SK-N-SH (cell line): ENCODE measurements at regions of chr7 and their contacts with region 1.

Region 1: DNA sequence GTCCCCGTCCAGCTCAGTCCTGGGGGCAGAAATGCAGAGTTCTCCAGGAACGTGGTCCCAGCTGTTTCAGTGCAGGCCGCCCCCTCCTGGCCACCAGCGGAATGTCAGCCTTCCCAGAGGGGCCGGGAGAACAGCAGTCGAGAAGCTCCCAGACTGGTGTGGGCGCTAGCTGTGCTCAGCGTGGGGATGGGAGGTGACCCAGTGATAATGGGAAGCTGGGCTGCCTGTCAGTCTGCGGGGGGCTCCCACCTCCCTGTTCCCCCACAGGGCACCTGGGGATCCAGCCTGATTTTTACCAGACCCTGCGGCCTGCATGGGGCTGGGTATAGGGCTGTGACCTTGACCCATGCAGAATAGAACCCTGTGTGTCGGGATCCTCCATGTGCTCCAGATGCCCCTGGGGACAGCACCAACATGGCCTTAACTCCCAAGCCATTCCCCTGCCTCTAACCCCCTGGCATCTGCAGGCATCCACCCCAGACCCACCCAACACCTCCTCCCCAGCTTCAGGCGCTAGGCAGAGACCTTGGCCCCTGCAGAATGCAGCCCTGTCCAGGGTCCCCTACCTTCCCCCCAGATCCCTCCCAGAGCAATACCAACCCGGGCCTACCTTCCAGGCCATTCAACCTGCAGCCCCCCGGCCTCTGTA is 946 bp upstream of the ELN start:
- DNase-seq: peak; percentile 92
- H3K4me3 ChIP-seq: no peak overlapping the region; a peak in 1 of 4 replicates
- H3K27ac ChIP-seq: peak overlapping the region; percentile 11 to 78; a peak in 2 of 4 replicates
- H3K4me1 ChIP-seq: peaks cover 22 to 85% of the 10 kb centered on the region in 2 experiments
- H3K27me3 ChIP-seq: no peaks in the 10 kb centered on the region
- CTCF ChIP-seq: peak; percentile 99
- EP300 ChIP-seq: peak in 1 of 2 experiments; percentile 64; a peak in 2 of 4 replicates
- RAD21 ChIP-seq: peak; percentile 92

Region 2: DNA sequence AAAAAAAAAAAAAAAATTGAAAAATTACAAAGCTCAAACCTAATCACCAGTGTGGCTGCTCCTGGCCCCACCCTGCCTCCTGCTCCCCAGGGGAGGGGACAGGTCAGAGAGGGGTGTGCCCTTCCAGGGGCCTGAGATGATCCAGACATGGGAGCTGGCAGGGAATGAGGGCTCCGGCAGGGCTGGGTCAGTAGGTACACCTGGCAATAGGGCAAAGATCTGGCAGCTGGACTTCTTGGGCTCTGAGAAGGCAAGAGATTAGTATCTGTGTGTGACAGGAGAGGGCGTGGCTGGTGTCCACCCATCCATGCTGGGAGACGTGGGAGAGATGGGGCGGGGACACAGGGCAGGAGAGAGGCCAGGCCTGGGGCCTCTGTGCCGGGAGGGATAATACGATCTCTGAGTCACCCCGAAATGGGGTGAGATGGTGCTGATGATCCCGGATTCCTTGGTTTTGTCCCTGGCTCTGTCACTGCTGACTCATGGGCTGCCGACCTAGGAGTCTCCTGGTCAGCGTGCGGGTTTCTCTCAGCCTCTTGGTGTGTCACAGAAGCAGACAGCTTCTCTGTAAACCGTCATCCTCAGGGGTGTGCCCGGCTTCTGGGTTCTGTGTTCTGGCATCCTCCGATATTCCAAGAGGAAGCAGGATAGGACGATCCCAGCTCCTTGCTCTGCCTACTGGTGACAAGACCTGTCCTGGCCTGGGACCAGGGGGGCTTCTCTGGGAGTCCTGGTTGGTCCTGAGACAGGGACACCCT is 204.5 kb before region 1 on chr7:
- CTCF ChIA-PET with region 1: interaction called, 15 read pairs
- POLR2A ChIA-PET with region 1: no interaction called
- DNase-seq: peak; percentile 70
- H3K4me3 ChIP-seq: no peak overlapping the region; a peak in 1 of 4 replicates
- H3K27ac ChIP-seq: peak overlapping the region; percentile 2 to 93; a peak in 3 of 4 replicates
- H3K4me1 ChIP-seq: peaks cover 10 to 22% of the 10 kb centered on the region in 2 experiments
- H3K27me3 ChIP-seq: no peaks in the 10 kb centered on the region
- CTCF ChIP-seq: no peak
- EP300 ChIP-seq: peak; percentile 21 to 95; a peak in 2 of 4 replicates
- RAD21 ChIP-seq: no peak

Region 3: GRCh38 chr7:73872056-73872908 is 154.7 kb before region 1 on chr7:
- CTCF ChIA-PET with region 1: interaction called, 57 read pairs
- POLR2A ChIA-PET with region 1: interaction called, 3 read pairs
- DNase-seq: no peak
- H3K4me3 ChIP-seq: no peak overlapping the region
- H3K27ac ChIP-seq: no peak overlapping the region
- H3K4me1 ChIP-seq: peaks cover 0 to 33% of the 10 kb centered on the region in 2 experiments; a peak in 1 of 4 replicates
- H3K27me3 ChIP-seq: no peaks in the 10 kb centered on the region
- CTCF ChIP-seq: no peak
- EP300 ChIP-seq: peak in 1 of 2 experiments; percentile 14; a peak in 1 of 4 replicates
- RAD21 ChIP-seq: no peak

Region 4: GRCh38 chr7:73894733-73895551 is 132.1 kb before region 1 on chr7:
- CTCF ChIA-PET with region 1: interaction called, 15 read pairs
- POLR2A ChIA-PET with region 1: no interaction called
- DNase-seq: peak; percentile 87
- H3K4me3 ChIP-seq: no peak overlapping the region
- H3K27ac ChIP-seq: peak overlapping the region in 1 of 2 experiments; percentile 93; a peak in 2 of 4 replicates
- H3K4me1 ChIP-seq: peaks cover 33 to 36% of the 10 kb centered on the region in 2 experiments; a peak in 3 of 4 replicates
- H3K27me3 ChIP-seq: no peaks in the 10 kb centered on the region
- CTCF ChIP-seq: peak; percentile 35; the same call in 1 of the 2 replicates
- EP300 ChIP-seq: peak; percentile 49 to 99
- RAD21 ChIP-seq: peak; percentile 25; the same call in 1 of the 2 replicates

Region 5: GRCh38 chr7:73978661-73979563 is 48.1 kb before region 1 on chr7:
- CTCF ChIA-PET with region 1: interaction called, 25 read pairs
- POLR2A ChIA-PET with region 1: interaction called, 4 read pairs
- DNase-seq: peak; percentile 55
- H3K4me3 ChIP-seq: no peak overlapping the region
- H3K27ac ChIP-seq: no peak overlapping the region
- H3K4me1 ChIP-seq: peaks cover 0 to 11% of the 10 kb centered on the region in 2 experiments; a peak in 1 of 4 replicates
- H3K27me3 ChIP-seq: no peaks in the 10 kb centered on the region
- CTCF ChIP-seq: peak; percentile 52
- EP300 ChIP-seq: no peak
- RAD21 ChIP-seq: peak; percentile 55

Region 6: DNA sequence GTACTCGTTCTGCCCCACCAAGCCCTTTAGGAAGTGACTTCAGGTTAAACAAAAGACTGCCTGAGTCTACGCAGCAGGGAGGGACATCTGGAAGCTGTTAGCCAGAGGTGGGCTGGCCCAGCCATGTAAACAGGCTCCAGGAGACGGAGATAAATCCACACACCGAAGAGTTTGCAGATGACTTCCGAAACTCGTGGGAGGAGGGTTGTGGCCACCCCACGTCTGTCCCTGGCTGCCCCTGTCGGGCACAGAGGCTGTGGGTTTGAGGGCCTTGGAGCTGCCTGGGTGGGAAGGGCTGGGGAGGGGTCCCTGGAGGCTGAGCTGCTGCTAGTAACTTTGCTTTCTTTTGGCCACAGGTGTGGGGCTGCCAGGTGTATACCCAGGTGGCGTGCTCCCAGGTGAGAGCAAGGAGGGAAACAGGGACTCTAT is 16.5 kb after region 1 on chr7:
- CTCF ChIA-PET with region 1: interaction called, 107 read pairs
- POLR2A ChIA-PET with region 1: interaction called, 4 read pairs
- DNase-seq: peak; percentile 91
- H3K4me3 ChIP-seq: peak overlapping the region in 1 of 2 experiments; percentile 37; a peak in 2 of 4 replicates
- H3K27ac ChIP-seq: peak overlapping the region; percentile 31 to 99; a peak in 3 of 4 replicates
- H3K4me1 ChIP-seq: peaks cover 20 to 65% of the 10 kb centered on the region in 2 experiments
- H3K27me3 ChIP-seq: no peaks in the 10 kb centered on the region
- CTCF ChIP-seq: no peak
- EP300 ChIP-seq: peak in 1 of 2 experiments; percentile 70; a peak in 1 of 4 replicates
- RAD21 ChIP-seq: no peak; the same call in 1 of the 2 replicates

Region 7: DNA sequence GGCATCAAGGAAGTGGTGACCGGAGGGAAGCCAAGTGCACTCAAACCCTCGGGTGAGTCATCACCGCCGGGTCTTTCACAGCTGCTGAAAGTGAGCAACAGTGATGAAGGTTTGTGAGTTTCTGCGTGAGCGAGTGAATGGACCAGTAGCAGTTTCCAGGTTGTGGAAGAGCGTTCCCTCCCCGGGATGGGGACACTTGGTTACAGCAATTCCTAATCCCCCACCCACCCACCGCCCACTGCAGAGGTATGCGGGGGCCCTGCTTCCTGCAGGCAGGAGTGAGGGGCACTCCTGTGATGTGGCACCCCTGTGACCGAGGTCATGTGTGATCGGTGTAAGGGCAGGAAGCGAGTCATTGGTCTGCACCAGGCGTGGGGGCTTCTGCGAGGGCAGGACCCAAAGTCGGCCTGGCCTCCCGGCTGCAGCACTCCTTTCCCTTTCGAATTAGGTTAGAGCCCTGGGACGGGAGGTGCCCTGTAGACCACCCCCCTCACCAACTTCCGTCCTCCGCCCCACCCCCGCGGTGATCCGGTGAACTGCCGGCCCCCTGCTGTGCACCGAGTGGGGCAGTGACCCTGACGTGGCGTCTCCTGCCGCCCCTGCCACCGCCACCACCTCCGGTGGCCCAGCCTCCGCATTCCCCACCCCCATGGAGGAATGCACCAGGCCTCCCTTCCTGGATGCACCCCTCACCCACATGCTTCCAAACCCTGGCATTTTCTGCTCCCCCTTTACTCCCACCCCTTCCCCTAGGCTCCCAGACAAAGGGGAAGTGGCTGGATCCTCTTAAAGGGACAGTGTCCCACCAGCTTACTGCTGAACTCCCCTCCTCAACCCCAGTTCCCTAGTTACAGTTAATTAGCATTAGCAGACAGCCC is 67.4 kb after region 1 on chr7:
- CTCF ChIA-PET with region 1: interaction called, 10 read pairs
- POLR2A ChIA-PET with region 1: no interaction called
- DNase-seq: peak; percentile 90
- H3K4me3 ChIP-seq: peak overlapping the region; percentile 36 to 60
- H3K27ac ChIP-seq: peak overlapping the region; percentile 95
- H3K4me1 ChIP-seq: peaks cover 41 to 50% of the 10 kb centered on the region in 2 experiments; a peak in 3 of 4 replicates
- H3K27me3 ChIP-seq: no peaks in the 10 kb centered on the region
- CTCF ChIP-seq: no peak
- EP300 ChIP-seq: peak; percentile 21 to 83; a peak in 2 of 4 replicates
- RAD21 ChIP-seq: peak; percentile 30